Ovary (tissue), 10 donors: ENCODE measurements at regions of chr22 and their contacts with region 1.

Region 1: GRCh38 chr22:28547132-28547842 is 132.4 kb downstream of the TTC28 start:
- DNase-seq: no peak
- H3K4me3 ChIP-seq: no peak overlapping the region
- H3K27ac ChIP-seq: no peak overlapping the region
- H3K4me1 ChIP-seq: no peaks in the 10 kb centered on the region
- H3K27me3 ChIP-seq: no peaks in the 10 kb centered on the region
- CTCF ChIP-seq: no peak
- EP300 ChIP-seq: no peak
- POLR2A ChIP-seq: no peak

Region 2: GRCh38 chr22:28480000-28480715 is 67.1 kb before region 1 on chr22:
- intact Hi-C with region 1: loop called in 1 of 4 experiments (anchors 10 kb)
- DNase-seq: no peak
- H3K4me3 ChIP-seq: no peak overlapping the region
- H3K27ac ChIP-seq: no peak overlapping the region
- H3K4me1 ChIP-seq: peaks cover 2% of the 10 kb centered on the region
- H3K27me3 ChIP-seq: no peaks in the 10 kb centered on the region
- CTCF ChIP-seq: no peak
- EP300 ChIP-seq: no peak
- POLR2A ChIP-seq: no peak

Region 3: DNA sequence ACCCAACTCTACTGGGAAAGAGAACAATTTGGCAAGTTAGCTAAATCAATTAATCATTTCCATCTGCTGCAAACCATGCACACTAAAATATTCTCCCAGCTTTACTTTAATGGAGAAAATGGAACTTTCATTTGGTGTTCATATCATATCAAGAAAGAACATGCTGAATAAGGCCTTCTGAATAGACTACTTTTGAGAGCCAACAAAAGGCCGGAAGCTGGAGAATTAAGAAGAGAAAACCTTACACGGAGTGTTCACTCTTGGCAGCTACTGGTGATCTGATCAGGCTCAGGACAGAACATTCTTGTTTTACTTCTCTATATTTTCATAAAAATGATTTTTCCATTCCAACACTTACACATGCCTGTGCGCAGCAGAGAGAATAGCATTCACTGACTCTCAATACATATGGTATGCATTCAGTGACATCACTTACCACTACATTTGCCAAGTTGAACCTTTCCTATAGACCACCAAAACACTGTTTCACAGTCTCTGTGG is 32.9 kb before region 1 on chr22:
- intact Hi-C with region 1: no loop called
- DNase-seq: no peak
- H3K4me3 ChIP-seq: no peak overlapping the region
- H3K27ac ChIP-seq: peak overlapping the region in 1 of 2 donors; percentile 15
- H3K4me1 ChIP-seq: peaks cover 2% of the 10 kb centered on the region
- H3K27me3 ChIP-seq: no peaks in the 10 kb centered on the region
- CTCF ChIP-seq: no peak
- EP300 ChIP-seq: no peak
- POLR2A ChIP-seq: no peak

Region 4: GRCh38 chr22:28629420-28630176 is 82.3 kb after region 1 on chr22:
- intact Hi-C with region 1: no loop called
- DNase-seq: no peak
- H3K4me3 ChIP-seq: no peak overlapping the region
- H3K27ac ChIP-seq: no peak overlapping the region
- H3K4me1 ChIP-seq: no peaks in the 10 kb centered on the region
- H3K27me3 ChIP-seq: no peaks in the 10 kb centered on the region
- CTCF ChIP-seq: no peak
- EP300 ChIP-seq: no peak
- POLR2A ChIP-seq: no peak